Mucosa of descending colon (tissue), 3 donors: ENCODE measurements at regions of chr16 and their contacts with region 1.

Region 1: DNA sequence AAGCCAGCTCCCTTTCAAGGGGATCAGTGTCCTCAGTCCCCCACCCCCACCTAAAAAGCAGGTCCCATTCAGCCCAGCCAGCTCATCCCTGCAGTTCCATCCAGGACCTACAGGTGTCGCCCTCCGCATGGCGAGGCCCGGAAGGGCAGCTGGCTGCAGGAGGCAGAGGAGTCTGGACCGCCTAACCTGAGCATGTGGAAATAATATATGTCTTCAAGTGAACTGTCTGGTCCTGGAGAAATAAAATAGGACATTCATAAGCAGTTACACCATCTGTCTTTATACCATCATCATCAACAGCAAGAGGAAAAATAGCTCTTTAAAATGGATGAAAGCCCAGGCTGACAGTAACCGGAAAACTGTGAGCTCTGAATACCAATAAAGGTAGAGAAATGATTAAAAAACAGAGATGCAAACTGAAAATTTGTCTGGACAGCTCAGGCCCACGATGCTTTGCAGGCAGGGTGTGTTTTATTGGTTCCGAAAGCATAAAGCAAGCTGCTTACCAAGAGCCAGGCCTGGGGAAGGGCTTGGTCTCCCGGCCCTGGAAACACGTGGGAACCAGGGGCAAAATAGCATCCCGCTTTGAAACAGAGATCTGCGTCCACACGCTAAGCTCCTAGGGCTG is 215.2 kb downstream of the ZFHX3 start:
- DNase-seq: peak; percentile 72 to 89 (median 88)
- ATAC-seq: peak; percentile 93
- H3K4me3 ChIP-seq: no peak overlapping the region
- H3K4me1 ChIP-seq: peaks cover 7% of the 10 kb centered on the region
- CTCF ChIP-seq: peak; percentile 96

Region 2: GRCh38 chr16:72604375-72604774 is 228.4 kb before region 1 on chr16:
- intact Hi-C with region 1: no loop called
- DNase-seq: no peak
- ATAC-seq: no peak
- H3K4me3 ChIP-seq: no peak overlapping the region
- H3K4me1 ChIP-seq: no peaks in the 10 kb centered on the region
- CTCF ChIP-seq: no peak

Region 3: GRCh38 chr16:73058221-73058615 is 225.5 kb after region 1 on chr16:
- intact Hi-C with region 1: loop called in 1 of 2 experiments (anchors 10 kb)
- DNase-seq: peak in 2 of 3 donors; percentile 63 to 76
- ATAC-seq: peak; percentile 55
- H3K4me3 ChIP-seq: peak overlapping the region; percentile 50
- H3K4me1 ChIP-seq: peaks cover 31% of the 10 kb centered on the region
- CTCF ChIP-seq: no peak

Region 4: DNA sequence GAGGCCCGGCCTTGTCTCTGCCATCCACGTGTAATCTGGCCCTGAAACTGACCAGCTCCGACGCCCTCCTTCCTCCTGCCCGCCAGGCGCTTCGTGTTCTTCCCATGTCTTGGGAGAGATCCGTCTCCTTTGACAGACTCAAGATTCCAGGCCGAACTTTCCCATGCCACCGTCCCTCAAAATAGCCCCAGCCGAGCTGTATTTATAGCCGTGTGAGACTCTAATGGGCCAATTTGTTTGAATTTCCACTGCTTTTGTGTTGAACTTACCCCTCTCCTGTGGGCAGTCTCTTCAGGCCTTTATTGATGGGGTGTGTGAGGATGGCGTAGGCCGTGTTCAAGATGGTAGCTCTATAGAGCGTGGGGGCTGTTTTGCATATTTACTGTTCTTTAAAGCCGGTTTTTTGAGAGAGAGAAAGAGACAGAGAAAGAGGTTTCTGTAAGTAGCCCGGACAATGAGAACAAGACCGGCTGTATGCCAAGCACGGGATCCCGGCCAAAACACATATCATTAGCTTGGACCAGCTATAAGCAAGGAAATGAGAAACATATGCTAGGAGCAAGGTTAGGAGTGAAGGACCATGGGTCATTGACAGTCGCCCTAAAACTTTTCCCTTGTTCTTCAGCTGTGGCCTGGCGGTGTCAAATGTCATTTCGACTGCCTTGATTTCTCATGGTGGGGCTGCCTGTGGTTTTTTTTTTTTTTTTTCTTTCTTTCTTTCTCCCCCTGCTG is 339.7 kb after region 1 on chr16:
- intact Hi-C with region 1: loop called in 1 of 2 experiments (anchors 10 kb)
- DNase-seq: peak; percentile 81 to 93 (median 84)
- ATAC-seq: peak; percentile 88
- H3K4me3 ChIP-seq: no peak overlapping the region
- H3K4me1 ChIP-seq: peaks cover 21% of the 10 kb centered on the region
- CTCF ChIP-seq: no peak

Region 5: DNA sequence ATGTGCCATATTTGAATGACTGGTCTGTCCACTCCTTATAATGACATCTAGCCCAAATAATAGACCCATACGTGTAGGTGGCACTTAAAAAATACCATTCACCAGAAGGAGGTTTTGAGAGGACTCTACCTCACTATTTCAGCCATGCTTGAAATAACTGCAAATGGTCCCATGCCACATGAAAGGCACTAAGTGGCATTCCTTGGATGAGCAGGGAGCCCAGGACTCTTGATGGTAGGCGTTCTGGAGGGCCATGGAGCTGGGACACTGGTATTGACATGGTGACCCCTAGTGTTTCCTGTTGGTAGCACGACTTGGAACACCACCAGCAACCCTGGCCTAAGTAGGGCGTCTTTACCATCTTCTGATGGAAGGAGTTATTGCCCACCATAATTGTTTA is 363.9 kb after region 1 on chr16:
- intact Hi-C with region 1: loop called in 1 of 2 experiments (anchors 5 kb)
- DNase-seq: peak in 2 of 3 donors; percentile 54 to 87
- ATAC-seq: peak; percentile 94
- H3K4me3 ChIP-seq: no peak overlapping the region
- H3K4me1 ChIP-seq: peaks cover 5% of the 10 kb centered on the region
- CTCF ChIP-seq: peak; percentile 21